ENCODE measurements at regions of chr9 and their contacts with region 1.

Region 1: GRCh38 chr9:91558879-91559278 is 135.2 kb upstream of the NFIL3 start:
- DNase-seq: no peak
- H3K4me3 Mint-ChIP-seq: no peak overlapping the region
- H3K27ac Mint-ChIP-seq: no peak overlapping the region
- H3K4me1 Mint-ChIP-seq: no peaks in the 10 kb centered on the region
- H3K27me3 Mint-ChIP-seq: peaks cover 38% of the 10 kb centered on the region

Region 2: DNA sequence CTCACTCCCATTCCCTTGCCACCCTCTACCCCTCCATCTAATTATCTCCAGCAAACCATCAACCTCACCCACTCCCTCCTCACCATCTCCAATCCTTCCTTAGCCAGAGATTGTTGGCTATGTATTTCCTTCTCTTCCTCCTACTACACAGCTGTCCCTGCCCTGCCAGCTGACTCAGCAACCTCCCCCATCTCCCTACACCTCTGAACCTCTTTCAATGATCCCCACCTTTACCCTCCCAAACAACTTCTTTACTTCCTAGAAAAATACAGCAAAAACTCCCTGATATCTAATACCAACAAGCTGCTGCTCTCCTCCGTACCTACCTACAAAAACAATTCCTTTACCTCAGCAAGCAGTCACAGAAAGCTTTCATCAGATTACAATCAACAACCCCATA is 519.0 kb after region 1 on chr9:
- intact Hi-C with region 1: loop called (anchors 5 kb)
- DNase-seq: no peak
- H3K4me3 Mint-ChIP-seq: no peak overlapping the region
- H3K27ac Mint-ChIP-seq: no peak overlapping the region
- H3K4me1 Mint-ChIP-seq: no peaks in the 10 kb centered on the region
- H3K27me3 Mint-ChIP-seq: no peaks in the 10 kb centered on the region

Region 3: DNA sequence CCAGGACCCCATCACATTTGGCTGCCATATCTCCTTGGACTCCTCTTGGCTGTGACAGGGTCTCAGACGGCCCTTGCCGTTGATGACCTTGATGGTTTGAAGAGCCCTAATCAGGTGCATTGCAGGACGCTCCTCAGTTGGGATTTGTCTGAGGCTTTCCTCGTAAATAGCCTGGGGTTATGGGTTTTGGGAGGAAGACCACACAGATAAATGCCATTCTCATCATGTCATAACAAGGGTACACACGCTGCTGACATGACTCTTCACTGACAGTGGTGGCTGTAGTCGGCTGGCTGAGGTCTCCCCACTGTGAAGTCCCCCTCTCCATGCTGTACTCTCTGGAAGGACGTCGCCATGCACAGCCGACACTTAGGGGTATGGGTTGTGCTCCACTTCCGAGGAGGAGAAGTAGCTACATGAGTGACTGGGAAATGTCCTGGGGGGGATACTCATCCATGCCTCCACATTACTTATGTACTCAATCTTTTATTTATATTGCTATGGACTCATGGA is 599.3 kb after region 1 on chr9:
- intact Hi-C with region 1: no loop called
- DNase-seq: no peak
- H3K4me3 Mint-ChIP-seq: no peak overlapping the region
- H3K27ac Mint-ChIP-seq: no peak overlapping the region
- H3K4me1 Mint-ChIP-seq: no peaks in the 10 kb centered on the region
- H3K27me3 Mint-ChIP-seq: peaks cover 16% of the 10 kb centered on the region